PC-9 (cell line): ENCODE measurements at regions of chr3 and their contacts with region 1.

Region 1: GRCh38 chr3:141570068-141570467 is 83.2 kb downstream of the RASA2 start:
- DNase-seq: no peak
- H3K4me3 ChIP-seq: no peak overlapping the region
- H3K27ac ChIP-seq: no peak overlapping the region
- H3K4me1 ChIP-seq: no peaks in the 10 kb centered on the region
- H3K27me3 ChIP-seq: no peaks in the 10 kb centered on the region
- CTCF ChIP-seq: no peak

Region 2: DNA sequence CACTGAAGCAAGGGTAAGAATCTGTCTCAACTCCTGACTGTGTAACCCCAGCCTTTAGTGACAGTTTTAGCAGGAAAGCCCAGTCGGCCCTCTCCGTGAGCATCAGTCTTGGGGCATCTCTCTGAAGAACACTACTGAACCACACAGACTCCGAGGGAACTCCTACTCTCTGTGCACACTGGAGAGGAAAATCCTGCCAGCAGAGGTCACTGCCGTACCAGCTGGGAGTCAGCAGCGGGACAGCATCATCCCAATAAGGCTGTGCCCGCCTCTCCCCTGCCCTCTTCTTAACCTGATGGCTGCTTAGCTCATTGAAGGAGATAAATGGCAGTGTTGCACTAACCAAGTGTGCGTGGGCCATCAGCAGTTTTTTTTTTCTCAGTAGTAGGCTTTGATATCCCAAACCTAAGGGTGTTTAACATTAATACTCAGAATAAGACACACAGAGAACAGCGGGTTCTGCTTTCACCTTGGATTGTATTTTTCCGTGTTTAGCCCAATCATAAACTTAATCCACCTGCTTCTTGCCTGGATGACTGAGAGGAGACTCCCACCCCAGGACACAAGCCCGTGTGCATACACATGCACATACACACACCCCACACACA is 109.9 kb before region 1 on chr3:
- CTCF ChIA-PET with region 1: interaction called, 24 read pairs
- POLR2A ChIA-PET with region 1: no interaction called
- intact Hi-C with region 1: no loop called
- DNase-seq: peak; percentile 57 to 86
- H3K4me3 ChIP-seq: no peak overlapping the region
- H3K27ac ChIP-seq: no peak overlapping the region
- H3K4me1 ChIP-seq: peaks cover 13% of the 10 kb centered on the region
- H3K27me3 ChIP-seq: no peaks in the 10 kb centered on the region
- CTCF ChIP-seq: peak; percentile 83

Region 3: DNA sequence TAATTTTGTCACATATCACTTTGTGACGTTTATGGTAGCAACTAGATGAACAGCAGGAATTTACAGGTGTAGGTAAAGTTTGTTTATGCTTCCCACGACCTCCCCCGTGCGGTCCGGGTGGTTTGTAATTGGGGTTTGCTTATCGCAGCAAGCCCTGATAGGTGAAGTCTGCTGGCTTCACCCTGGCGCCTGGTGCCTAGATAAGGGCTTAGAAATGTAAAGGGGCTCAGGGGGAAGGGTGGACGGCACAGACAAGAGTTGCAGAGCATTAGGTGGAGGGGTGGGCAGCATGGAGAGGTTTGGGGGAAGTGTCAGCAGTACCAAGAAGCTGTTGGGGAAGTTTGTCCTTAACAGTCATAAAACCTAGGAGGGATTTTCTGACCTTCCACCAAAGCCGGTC is 59.9 kb after region 1 on chr3:
- CTCF ChIA-PET with region 1: interaction called, 12 read pairs
- POLR2A ChIA-PET with region 1: no interaction called
- intact Hi-C with region 1: no loop called
- DNase-seq: no peak
- H3K4me3 ChIP-seq: no peak overlapping the region
- H3K27ac ChIP-seq: no peak overlapping the region
- H3K4me1 ChIP-seq: no peaks in the 10 kb centered on the region
- H3K27me3 ChIP-seq: no peaks in the 10 kb centered on the region
- CTCF ChIP-seq: no peak